Activated T-helper 2 cell treated with anti-CD3 and anti-CD28 coated beads, Interferon-gamma antibody, Interleukin-2, Interleukin-4, amounts not matched to agents 10 μg/mL and 5 μg/mL and 100 μg/mL, durations not matched to agents 14 hours and 24 hours and 36 hours (primary cell): ENCODE measurements at regions of chr13 and their contacts with region 1.

Region 1: GRCh38 chr13:75549262-75550158 is at the start of gene UCHL3:
- DNase-seq: peak; percentile 95
- H3K4me3 Mint-ChIP-seq: peak within 1 kb of the TSS; percentile 97
- H3K27ac Mint-ChIP-seq: peak within 1 kb of the TSS; percentile 96
- H3K4me1 Mint-ChIP-seq: peaks cover 19% of the 10 kb centered on the region
- H3K27me3 Mint-ChIP-seq: no peaks in the 10 kb centered on the region
- total RNA-seq, gene UCHL3: 35.4 and 37.9 TPM in 2 replicates

Region 2: DNA sequence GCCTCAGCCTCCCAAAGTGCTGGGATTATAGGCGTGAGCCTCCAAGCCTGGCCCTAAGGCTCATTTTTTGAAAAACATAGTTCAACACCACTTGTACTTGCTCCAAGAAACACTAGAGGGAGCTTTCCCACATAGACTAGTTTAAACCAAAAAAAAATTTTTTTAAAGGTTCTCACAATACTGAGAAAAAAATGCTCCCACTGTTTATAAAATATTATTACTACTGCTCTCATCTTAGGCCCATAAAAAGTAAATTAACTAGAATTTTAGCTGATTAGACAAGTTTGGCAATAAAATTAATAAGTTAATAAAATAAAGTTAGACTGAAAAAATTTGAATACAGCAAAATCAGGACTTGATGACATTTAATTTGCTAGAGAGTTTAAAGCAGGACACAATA is 177.0 kb before region 1 on chr13:
- intact Hi-C with region 1: loop called (anchors 1 kb)
- DNase-seq: no peak
- H3K4me3 Mint-ChIP-seq: no peak overlapping the region
- H3K27ac Mint-ChIP-seq: no peak overlapping the region
- H3K4me1 Mint-ChIP-seq: peaks cover 9% of the 10 kb centered on the region
- H3K27me3 Mint-ChIP-seq: peaks cover 2% of the 10 kb centered on the region

Region 3: DNA sequence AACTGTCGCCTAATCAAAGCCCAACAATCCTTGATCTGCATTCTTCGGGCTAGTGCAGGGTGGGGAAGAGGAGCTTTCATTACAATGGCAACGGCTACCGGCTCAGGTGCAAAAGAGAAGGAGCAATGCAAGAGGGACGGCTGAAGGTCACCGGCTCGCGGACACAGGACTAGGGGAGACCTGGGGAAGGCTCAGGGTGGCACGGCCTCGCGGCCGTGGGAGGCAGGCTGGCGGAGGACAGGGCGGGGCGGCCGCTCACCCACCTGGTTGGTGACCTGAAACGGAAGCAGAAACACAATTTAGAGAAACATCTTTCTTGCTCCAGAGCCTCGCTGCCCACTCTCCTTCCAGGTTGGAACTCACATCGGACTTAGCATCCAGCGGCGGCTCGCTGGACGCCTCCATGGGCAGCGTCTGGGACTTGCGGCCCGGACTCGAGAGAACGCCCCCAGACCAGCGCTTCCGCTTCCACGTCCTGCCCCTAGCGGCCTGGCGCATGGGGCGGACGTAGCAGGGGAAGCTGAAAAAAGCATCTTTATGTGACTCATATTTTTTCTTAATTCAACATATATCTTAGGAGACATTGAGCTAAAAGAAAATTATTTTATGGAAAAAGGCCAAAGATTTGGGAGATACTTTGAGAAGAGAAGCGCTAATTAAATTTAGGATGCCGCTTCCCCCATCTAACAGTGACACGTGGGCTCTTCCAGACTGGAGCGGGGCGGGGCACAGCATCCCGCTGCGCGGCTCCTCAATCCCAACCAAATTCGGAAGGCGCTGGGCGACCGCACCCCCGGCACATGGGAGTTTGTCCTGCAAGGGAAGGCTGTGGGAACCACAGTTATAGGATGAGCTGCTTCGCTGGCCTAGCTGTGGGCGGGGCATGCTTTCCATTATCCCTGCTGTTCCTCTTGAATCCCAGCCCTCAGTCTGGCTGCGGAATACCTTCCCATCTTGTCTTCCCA is 11.8 kb before region 1 on chr13 and contains the start of gene COMMD6:
- intact Hi-C with region 1: loop called (anchors 1 kb)
- DNase-seq: peak; percentile 65
- H3K4me3 Mint-ChIP-seq: peak within 1 kb of the TSS; percentile 93
- H3K27ac Mint-ChIP-seq: peak within 1 kb of the TSS; percentile 79
- H3K4me1 Mint-ChIP-seq: peaks cover 31% of the 10 kb centered on the region
- H3K27me3 Mint-ChIP-seq: no peaks in the 10 kb centered on the region
- total RNA-seq, gene COMMD6: 120 TPM in 2 replicates

Region 4: DNA sequence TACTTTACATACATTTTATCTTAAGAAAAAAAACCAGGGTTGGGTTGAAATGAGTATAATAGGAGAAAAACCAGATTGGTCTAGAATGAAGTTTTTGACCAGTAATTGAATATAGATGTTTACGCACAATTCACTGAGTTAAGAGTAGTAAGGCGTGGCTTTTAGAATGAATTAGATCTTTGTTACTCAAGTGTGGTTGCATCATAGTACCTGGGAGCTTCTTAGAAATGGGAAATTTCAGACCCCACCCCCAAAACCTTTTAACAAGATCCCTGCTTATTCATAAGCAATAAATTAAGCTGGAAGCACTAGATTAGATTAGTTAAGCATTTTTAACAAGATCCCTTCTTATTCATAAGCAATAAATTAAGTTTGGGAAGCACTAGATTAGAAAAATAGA is 57.9 kb after region 1 on chr13:
- intact Hi-C with region 1: no loop called
- DNase-seq: no peak
- H3K4me3 Mint-ChIP-seq: no peak overlapping the region
- H3K27ac Mint-ChIP-seq: no peak overlapping the region
- H3K4me1 Mint-ChIP-seq: no peaks in the 10 kb centered on the region
- H3K27me3 Mint-ChIP-seq: no peaks in the 10 kb centered on the region

Region 5: DNA sequence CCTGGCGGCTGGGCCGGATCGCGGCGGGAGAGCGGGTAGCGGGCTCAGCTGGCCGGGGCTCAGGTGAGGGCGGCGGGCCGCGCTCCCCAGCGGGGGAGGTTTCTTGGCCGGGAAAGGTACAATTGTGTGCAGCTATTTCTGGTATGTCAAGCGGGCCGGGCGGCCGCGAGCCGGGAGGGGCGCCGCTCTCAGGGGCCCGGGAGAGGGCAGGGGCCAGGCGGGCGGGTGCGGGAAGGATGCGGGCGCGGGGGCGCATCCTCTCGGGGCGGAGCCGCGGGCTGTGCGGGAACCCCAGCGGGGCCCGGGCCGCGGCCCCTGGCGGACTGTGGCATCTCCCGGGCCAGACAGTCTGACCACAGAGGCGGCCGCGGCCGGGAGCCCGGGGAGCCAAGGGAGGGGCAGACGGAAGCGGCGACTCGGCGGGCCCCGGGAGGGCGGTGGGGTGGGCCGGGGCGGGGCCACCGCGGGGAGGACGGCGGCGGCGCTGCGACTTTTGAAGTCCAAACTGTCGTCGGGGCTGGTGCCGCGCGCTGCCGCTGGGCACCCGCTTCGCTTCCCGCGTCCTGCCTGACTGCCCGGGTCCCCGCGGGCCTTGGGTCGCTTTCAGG is 86.4 kb after region 1 on chr13 and contains the start of gene LMO7:
- intact Hi-C with region 1: loop called (anchors 5 kb)
- DNase-seq: peak; percentile 27
- H3K4me3 Mint-ChIP-seq: peak within 1 kb of the TSS; percentile 73
- H3K27ac Mint-ChIP-seq: no peak within 1 kb of the TSS
- H3K4me1 Mint-ChIP-seq: peaks cover 13% of the 10 kb centered on the region
- H3K27me3 Mint-ChIP-seq: peaks cover 36% of the 10 kb centered on the region
- total RNA-seq, gene LMO7: 6.2 and 6.9 TPM in 2 replicates